ENCODE measurements at regions of chr10 and their contacts with region 1.

Region 1: GRCh38 chr10:89810908-89811515 is 109.6 kb downstream of the KIF20B start:
- DNase-seq: no peak
- H3K4me3 ChIP-seq: no peak overlapping the region
- H3K4me3 Mint-ChIP-seq: no peak overlapping the region
- H3K27ac Mint-ChIP-seq: no peak overlapping the region
- H3K4me1 ChIP-seq: peaks cover 36% of the 10 kb centered on the region
- H3K4me1 Mint-ChIP-seq: peaks cover 41% of the 10 kb centered on the region
- H3K27me3 ChIP-seq: no peaks in the 10 kb centered on the region
- H3K27me3 Mint-ChIP-seq: no peaks in the 10 kb centered on the region
- CTCF ChIP-seq: no peak

Region 2: DNA sequence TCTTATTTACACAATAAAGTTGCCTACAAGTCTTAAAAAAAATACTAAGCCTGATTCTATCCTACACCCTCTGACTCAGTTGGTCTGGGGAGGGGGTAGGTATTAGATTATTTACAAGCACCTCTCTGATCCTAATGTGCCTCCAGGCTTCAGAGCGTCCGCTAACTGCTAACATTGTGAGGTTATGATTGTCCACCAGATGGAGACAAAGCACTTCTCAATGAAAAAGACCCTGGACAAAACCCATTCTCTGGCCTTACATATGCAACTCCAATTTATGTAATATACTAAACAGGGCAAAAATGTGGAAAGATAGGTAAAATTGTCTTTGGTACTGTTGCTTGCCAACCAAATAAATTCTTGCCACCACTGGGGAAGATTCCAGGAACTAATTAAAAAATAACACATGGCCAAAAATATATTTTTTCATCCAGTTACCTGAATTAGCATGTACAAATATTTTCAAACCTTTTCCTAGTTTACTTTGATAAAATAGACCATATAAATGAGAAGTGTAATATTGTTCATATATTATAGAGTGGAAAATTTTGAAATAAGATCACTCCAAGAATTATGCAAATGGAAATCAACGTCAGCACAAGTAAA is 17.3 kb before region 1 on chr10:
- CTCF ChIA-PET with region 1: no interaction called
- POLR2A ChIA-PET with region 1: no interaction called
- intact Hi-C with region 1: no loop called
- DNase-seq: peak in 1 of 2 experiments; percentile 70
- H3K4me3 ChIP-seq: no peak overlapping the region
- H3K4me3 Mint-ChIP-seq: no peak overlapping the region
- H3K27ac Mint-ChIP-seq: no peak overlapping the region
- H3K4me1 ChIP-seq: no peaks in the 10 kb centered on the region
- H3K4me1 Mint-ChIP-seq: no peaks in the 10 kb centered on the region
- H3K27me3 ChIP-seq: no peaks in the 10 kb centered on the region
- H3K27me3 Mint-ChIP-seq: no peaks in the 10 kb centered on the region
- CTCF ChIP-seq: peak; percentile 82 to 87

Region 3: DNA sequence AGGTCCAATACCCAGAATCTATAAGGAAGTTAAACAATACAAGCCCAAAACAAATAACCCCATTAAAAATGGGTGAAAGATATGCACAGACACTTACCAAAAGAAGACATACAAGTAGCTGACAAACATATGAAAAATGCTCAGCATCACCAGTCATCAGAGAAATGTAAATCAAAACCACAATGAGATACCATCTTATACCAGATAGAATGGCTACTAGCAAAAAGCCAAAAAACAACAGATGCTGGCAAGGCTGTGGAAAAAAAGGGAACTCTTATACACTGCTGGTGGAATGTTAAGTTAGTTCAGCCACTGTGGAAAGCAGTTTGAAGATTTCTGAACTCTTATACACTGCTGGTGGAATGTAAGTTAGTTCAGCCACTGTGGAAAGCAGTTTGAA is 221.5 kb after region 1 on chr10:
- CTCF ChIA-PET with region 1: no interaction called
- POLR2A ChIA-PET with region 1: no interaction called
- intact Hi-C with region 1: no loop called
- DNase-seq: no peak
- H3K4me3 ChIP-seq: no peak overlapping the region
- H3K4me3 Mint-ChIP-seq: no peak overlapping the region
- H3K27ac Mint-ChIP-seq: no peak overlapping the region
- H3K4me1 ChIP-seq: no peaks in the 10 kb centered on the region
- H3K4me1 Mint-ChIP-seq: no peaks in the 10 kb centered on the region
- H3K27me3 ChIP-seq: no peaks in the 10 kb centered on the region
- H3K27me3 Mint-ChIP-seq: peaks cover 5% of the 10 kb centered on the region
- CTCF ChIP-seq: no peak

Region 4: GRCh38 chr10:90587081-90587491 is 776.1 kb after region 1 on chr10:
- CTCF ChIA-PET with region 1: no interaction called
- POLR2A ChIA-PET with region 1: no interaction called
- intact Hi-C with region 1: loop called (anchors 5 kb)
- DNase-seq: peak; percentile 11 to 38
- H3K4me3 ChIP-seq: no peak overlapping the region
- H3K4me3 Mint-ChIP-seq: no peak overlapping the region
- H3K27ac Mint-ChIP-seq: no peak overlapping the region
- H3K4me1 ChIP-seq: peaks cover 17% of the 10 kb centered on the region
- H3K4me1 Mint-ChIP-seq: peaks cover 8% of the 10 kb centered on the region
- H3K27me3 ChIP-seq: no peaks in the 10 kb centered on the region
- H3K27me3 Mint-ChIP-seq: peaks cover 4% of the 10 kb centered on the region
- CTCF ChIP-seq: no peak

Region 5: DNA sequence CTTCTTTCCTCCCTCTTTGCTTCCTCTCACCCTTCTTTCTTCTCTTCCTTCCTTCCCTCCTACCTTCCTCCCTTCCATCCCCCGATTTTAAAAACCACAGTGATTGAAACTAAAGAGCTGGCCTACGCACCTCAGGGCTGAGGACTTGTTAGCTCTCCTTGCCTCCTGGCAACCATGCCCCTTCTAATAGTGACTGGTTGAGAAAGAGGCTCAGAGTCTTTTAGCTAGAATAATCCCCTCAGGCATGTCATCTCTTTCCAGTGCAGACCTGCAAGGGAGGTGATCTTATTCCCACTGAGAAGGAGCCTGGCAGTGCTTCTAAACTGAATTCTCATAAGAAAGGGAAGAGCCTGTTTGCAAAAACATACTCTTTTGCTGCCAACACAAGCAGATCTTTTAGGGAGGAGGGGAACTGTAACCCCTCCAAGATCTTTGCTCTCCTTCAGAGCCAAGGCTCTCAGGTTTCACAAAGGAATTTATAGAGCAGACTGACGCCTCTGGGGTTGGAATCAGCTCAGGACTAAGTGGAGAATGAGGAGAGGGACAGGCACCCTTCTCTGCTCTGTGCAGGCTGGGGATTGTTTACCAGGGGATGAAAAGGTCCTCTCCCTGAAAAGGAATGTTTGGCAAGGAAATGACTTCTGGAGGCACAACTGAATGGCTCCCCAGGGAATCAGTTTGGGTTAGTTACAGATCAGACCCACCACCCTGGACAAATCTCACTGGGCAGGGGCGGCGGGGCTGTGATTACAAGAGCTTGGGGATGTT is 1119.2 kb after region 1 on chr10:
- CTCF ChIA-PET with region 1: no interaction called
- POLR2A ChIA-PET with region 1: no interaction called
- intact Hi-C with region 1: loop called (anchors 5 kb)
- DNase-seq: peak; percentile 80 to 89
- H3K4me3 ChIP-seq: no peak overlapping the region
- H3K4me3 Mint-ChIP-seq: peak overlapping the region; percentile 54
- H3K27ac Mint-ChIP-seq: peak overlapping the region; percentile 89
- H3K4me1 ChIP-seq: peaks cover 69% of the 10 kb centered on the region
- H3K4me1 Mint-ChIP-seq: peaks cover 53% of the 10 kb centered on the region
- H3K27me3 ChIP-seq: no peaks in the 10 kb centered on the region
- H3K27me3 Mint-ChIP-seq: no peaks in the 10 kb centered on the region
- CTCF ChIP-seq: no peak

Measured in Caco-2 (cell line).